Posterior cingulate gyrus (tissue), 11 donors: ENCODE measurements at regions of chr9 and their contacts with region 1.

Region 1: DNA sequence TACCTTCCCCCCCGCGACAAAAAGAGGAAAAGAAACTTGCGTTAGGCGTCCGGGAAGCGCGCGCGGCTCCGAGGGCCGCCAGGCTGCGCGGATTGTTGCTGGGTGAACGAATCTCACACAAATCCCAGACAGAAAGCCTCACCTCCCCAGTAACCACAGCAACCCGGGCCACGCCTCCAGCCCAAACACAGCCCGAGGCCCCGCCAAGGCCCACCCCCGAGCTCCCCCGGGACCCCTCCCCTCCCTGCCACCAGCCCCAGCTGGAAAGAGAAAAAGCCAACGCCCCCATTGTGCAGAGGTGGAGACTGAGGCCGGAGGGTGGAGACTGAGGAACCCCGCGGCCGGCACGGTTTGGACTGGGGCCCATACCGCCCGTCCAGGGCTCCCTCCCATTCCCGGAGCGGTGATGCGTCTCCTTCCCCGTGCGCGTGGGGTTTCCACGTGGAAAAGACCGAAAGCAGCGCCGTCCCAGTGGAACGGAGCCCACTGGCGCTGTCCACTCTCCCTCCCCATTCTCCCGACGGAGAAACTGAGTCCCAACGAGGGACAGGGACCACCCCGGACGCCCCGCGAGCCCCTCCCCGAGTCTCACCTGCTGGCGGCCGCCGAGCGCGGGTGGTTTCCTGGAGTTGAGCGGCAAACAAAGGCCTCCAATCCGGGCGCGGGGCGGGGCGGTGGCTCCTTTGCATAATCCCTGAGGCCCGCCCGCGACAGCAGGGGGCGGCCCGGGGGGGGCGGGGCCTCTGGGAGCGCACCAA is 10.2 kb upstream of the AKNA start:
- DNase-seq: peak; percentile 88 to 99 (median 96)

Region 2: GRCh38 chr9:114163517-114163951 is 234.5 kb before region 1 on chr9:
- intact Hi-C with region 1: no loop called
- DNase-seq: peak in 3 of 10 donors; percentile 31 to 76 (median 52)

Region 3: GRCh38 chr9:114373960-114374730 is 23.9 kb before region 1 on chr9:
- intact Hi-C with region 1: loop called (anchors 2 kb)
- DNase-seq: peak in 1 of 10 donors; percentile 46